ENCODE measurements at regions of chr20 and their contacts with region 1.

Region 1: DNA sequence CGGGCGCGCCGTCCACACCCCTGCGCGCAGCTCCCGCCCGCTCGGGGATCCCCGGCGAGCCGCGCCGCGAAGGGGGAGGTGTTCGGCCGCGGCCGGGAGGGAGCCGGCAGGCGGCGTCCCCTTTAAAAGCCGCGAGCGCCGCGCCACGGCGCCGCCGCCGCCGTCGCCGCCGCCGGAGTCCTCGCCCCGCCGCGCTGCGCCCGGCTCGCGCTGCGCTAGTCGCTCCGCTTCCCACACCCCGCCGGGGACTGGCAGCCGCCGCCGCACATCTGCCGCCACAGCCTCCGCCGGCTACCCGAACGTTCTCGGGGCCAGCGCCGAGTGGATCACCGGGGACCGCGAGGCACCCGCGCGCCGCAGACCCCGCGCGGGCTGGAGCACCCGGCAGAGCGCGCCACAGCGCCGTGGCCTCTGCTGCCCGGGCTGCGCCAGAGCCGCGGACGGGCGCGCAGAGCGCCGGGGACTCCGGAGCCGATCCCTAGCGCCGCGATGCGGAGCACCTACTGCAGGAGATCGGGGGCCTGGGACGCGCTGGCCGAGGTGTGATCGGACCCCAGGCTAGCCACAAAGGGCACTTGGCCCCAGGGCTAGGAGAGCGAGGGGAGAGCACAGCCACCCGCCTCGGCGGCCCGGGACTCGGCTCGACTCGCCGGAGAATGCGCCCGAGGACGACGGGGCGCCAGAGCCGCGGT is at the start of gene BMP2:
- DNase-seq: no peak
- H3K4me3 ChIP-seq: peak within 1 kb of the TSS; percentile 64
- H3K27ac ChIP-seq: no peak within 1 kb of the TSS
- H3K27me3 ChIP-seq: peaks cover 22% of the 10 kb centered on the region
- CTCF ChIP-seq: no peak
- polyA plus RNA-seq, gene BMP2: 1.6 and 1.8 TPM in 2 replicates

Region 2: GRCh38 chr20:6583134-6583738 is 184.4 kb before region 1 on chr20:
- CTCF ChIA-PET with region 1: interaction called, 17 read pairs
- POLR2A ChIA-PET with region 1: no interaction called
- DNase-seq: no peak
- H3K4me3 ChIP-seq: no peak overlapping the region
- H3K27ac ChIP-seq: no peak overlapping the region
- H3K27me3 ChIP-seq: no peaks in the 10 kb centered on the region
- CTCF ChIP-seq: peak; percentile 78

Region 3: DNA sequence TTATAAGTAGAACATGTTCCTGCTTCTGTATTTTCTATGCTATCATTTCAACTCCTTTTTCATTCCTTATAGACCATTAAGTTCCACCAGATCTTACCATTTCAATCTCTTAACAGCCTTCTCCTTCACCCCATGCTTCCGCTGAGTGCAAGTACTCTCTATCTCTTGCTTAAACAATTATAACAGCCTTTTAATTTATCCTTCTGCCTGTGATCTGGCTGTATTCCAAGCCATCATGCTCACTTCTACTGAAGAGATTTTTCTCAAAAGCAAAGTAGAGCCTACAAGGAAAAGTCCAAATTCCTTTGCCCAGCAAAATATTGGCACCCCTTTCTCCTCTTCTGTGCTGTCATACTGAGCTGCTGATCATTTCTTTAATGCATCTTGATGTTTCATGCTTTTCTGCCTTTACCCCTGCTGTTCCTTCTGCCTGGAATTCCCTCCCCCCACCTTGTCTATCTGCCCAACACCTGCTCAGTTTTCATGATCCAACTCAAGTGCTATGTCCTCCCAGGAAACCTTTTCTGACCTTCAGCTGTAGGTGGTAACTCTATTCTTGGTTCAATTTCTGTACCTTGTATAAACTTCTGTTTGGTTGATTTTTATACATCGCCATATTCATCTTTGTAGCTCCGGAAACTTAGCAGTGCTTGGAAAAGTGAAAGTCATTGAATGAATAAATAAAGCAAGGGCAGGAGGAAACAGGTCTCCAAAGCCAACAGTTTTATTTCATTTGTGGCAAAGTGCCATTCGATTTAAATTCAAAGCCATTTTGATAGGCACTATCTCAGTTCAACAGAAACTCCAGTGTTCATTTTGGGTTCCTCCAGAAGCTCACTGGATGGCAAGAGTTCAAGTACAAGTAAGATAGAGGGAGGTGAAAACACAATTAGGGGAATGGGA is 10.7 kb before region 1 on chr20:
- CTCF ChIA-PET with region 1: interaction called, 14 read pairs
- POLR2A ChIA-PET with region 1: no interaction called
- DNase-seq: no peak
- H3K4me3 ChIP-seq: no peak overlapping the region
- H3K27ac ChIP-seq: no peak overlapping the region
- H3K27me3 ChIP-seq: no peaks in the 10 kb centered on the region
- CTCF ChIP-seq: no peak

Region 4: DNA sequence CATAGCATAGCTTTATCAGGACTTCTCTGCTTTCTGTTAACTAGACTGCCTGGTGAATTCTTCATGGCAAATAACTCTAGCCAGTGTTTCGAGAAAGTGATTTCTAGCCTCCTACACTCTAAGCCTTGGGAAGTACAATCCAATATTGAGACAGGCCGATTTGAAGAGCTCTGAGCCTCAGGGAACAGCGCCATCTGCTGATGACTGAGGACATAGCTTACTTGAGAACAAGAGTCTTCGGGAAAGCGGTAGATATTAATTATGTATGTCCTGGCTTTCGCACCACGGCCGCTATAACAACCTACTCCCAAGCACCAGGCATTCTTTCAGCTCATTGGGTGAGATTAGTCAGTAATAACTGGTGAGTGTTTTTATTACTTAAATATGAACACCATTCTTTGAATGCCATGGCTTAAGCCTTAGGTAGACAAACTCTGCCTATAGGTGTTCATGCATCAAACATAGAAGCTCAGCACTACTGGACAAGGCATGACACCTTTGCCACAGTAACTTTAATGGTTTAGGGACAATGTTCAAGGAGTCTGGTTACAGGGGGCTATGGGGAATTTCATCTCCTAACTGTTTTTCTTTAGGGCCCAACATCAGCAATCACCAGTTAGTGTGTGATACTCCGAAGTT is 518.4 kb after region 1 on chr20:
- CTCF ChIA-PET with region 1: interaction called, 21 read pairs
- POLR2A ChIA-PET with region 1: no interaction called
- DNase-seq: peak; percentile 23
- H3K4me3 ChIP-seq: no peak overlapping the region
- H3K27ac ChIP-seq: no peak overlapping the region
- H3K27me3 ChIP-seq: no peaks in the 10 kb centered on the region
- CTCF ChIP-seq: peak; percentile 84

Region 5: DNA sequence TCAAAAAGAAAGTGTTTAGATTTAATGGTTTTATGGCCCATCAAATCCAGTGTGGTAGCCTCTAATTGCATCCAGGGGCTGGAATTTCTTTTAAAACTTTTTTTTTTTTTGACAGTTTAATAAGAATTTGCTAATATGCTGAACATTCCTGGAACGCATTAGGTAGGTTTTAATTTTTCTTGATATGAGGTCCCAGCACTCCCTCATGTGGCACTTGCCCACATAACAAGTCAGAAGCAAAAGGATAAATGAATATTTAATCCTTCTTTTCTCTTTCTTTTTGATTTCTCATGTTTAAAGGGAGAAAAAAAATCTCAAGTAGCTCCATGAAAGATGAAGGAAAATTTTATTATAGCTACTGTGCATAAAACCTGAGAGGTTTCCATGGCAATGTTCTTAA is 1159.1 kb after region 1 on chr20:
- CTCF ChIA-PET with region 1: interaction called, 19 read pairs
- POLR2A ChIA-PET with region 1: no interaction called
- DNase-seq: no peak
- H3K4me3 ChIP-seq: no peak overlapping the region
- H3K27ac ChIP-seq: no peak overlapping the region
- H3K27me3 ChIP-seq: no peaks in the 10 kb centered on the region
- CTCF ChIP-seq: peak; percentile 69